ENCODE measurements at regions of chr7 and their contacts with region 1.

Region 1: DNA sequence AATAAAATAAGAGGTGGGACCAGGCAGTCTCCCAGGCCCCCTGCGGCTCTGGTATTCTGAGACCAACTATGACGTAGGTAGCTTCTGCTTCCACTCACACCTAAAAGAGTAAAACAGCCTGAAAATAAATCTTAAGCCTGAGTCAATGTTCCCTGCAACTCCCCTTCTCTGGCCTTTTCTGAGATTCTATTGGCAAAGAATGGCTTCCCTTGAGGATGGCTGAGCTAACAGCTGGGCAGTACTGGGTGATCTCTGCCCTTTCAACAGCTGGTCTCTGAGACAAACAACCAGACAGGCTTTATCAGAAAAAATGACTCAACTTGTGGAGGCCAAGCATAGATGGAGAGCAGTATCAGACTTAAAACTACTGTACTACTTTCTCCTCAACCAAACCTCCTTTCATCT is 58.7 kb downstream of the CREB3L2 start:
- DNase-seq: no peak

Region 2: DNA sequence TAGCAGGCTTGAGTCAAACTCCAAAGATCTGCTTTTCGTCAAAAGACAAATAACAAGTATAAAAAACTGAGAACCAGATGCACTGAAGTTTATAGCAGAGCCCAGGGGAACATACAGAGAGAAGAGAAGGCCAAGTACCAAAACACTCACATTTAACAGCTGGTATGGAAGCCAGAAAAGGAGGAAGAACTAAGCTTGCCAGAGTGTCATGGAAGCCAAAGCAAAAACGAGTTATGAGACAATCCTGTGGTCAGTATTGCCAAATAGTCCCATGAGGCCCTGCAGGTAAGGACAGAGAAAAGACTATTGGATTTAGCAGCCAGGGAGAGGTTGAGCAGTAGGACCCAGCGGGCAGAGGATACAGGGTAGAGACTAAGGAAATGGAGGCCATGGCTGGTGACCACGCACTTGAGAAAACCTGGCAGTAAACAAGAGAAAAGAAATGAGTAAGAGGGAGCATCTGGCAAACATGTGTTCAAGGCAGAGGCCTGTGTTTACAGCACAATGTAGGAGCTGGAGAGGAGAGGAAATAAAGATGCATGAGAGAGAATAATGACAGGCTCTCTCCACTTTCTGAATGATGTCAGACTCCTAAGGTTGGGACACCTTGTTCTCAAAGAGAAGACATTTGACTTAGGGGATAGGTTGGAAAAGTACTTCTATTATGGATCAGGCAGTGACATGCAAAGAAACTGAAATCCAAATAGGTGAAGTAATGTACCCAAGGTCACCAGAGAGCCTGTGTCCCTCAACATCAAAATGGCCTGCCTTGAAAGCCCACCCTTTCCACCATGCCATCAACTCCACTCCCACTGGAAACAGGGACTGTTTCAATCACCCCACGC is 49.6 kb after region 1 on chr7:
- intact Hi-C with region 1: loop called (anchors 5 kb)
- DNase-seq: no peak